Activated CD4-positive, alpha-beta memory T cell treated with anti-CD3 and anti-CD28 coated beads for 36 hours (primary cell): ENCODE measurements at regions of chr7 and their contacts with region 1.

Region 1: GRCh38 chr7:23055582-23056178 is 41.8 kb upstream of the HYCC1 start:
- DNase-seq: peak; percentile 62
- H3K4me3 Mint-ChIP-seq: no peak overlapping the region
- H3K27ac Mint-ChIP-seq: no peak overlapping the region
- H3K4me1 Mint-ChIP-seq: peaks cover 5% of the 10 kb centered on the region
- H3K27me3 Mint-ChIP-seq: peaks cover 3% of the 10 kb centered on the region

Region 2: DNA sequence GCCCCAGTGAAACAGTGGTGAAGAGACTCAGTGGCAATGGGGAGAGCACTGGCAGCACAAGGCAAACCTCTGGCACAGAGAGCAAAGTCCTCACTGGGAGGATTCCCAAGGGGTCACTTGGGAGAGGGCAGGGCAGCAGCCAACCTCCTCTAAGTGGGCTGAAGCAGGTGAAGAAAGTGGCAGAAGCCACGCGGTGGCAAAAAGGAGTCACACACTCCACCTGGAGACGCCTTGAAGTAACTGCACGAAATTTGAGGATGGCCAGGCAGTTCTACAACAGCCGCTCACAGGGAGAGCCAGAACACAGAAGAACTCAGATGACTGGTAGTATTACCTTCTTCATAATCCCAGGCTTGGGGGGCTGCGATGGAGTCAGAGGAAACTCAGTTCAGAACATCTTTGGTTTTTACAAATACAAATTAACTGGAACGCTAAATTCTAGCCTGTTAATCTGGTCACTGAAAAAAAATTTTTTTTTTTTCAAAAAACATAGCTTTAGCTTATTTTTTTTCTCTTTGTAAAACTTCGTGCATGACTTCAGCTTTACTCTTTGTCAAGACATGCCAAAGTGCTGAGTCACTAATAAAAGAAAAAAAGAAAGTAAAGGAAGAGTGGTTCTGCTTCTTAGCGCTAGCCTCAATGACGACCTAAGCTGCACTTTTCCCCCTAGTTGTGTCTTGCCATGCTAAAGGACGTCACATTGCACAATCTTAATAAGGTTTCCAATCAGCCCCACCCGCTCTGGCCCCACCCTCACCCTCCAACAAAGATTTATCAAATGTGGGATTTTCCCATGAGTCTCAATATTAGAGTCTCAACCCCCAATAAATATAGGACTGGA is 329.1 kb before region 1 on chr7:
- CTCF ChIA-PET with region 1: interaction called, 41 read pairs
- POLR2A ChIA-PET with region 1: no interaction called
- intact Hi-C with region 1: loop called (anchors 2 kb)
- DNase-seq: peak; percentile 70
- H3K4me3 Mint-ChIP-seq: peak overlapping the region; percentile 57
- H3K27ac Mint-ChIP-seq: no peak overlapping the region
- H3K4me1 Mint-ChIP-seq: peaks cover 26% of the 10 kb centered on the region
- H3K27me3 Mint-ChIP-seq: peaks cover 32% of the 10 kb centered on the region

Region 3: GRCh38 chr7:22822486-22823141 is 233.1 kb before region 1 on chr7 and contains the start of gene TOMM7:
- CTCF ChIA-PET with region 1: interaction called, 21 read pairs
- POLR2A ChIA-PET with region 1: no interaction called
- intact Hi-C with region 1: loop called (anchors 1 kb)
- DNase-seq: peak; percentile 92
- H3K4me3 Mint-ChIP-seq: peak within 1 kb of the TSS; percentile 96
- H3K27ac Mint-ChIP-seq: peak within 1 kb of the TSS; percentile 90
- H3K4me1 Mint-ChIP-seq: peaks cover 34% of the 10 kb centered on the region
- H3K27me3 Mint-ChIP-seq: peaks cover 11% of the 10 kb centered on the region
- total RNA-seq, gene TOMM7: 277 to 279 TPM

Region 4: GRCh38 chr7:22885797-22886261 is 169.9 kb before region 1 on chr7:
- CTCF ChIA-PET with region 1: interaction called, 14 read pairs
- POLR2A ChIA-PET with region 1: no interaction called
- intact Hi-C with region 1: no loop called
- DNase-seq: peak; percentile 81
- H3K4me3 Mint-ChIP-seq: peak overlapping the region; percentile 45
- H3K27ac Mint-ChIP-seq: peak overlapping the region; percentile 88
- H3K4me1 Mint-ChIP-seq: peaks cover 39% of the 10 kb centered on the region
- H3K27me3 Mint-ChIP-seq: no peaks in the 10 kb centered on the region

Region 5: DNA sequence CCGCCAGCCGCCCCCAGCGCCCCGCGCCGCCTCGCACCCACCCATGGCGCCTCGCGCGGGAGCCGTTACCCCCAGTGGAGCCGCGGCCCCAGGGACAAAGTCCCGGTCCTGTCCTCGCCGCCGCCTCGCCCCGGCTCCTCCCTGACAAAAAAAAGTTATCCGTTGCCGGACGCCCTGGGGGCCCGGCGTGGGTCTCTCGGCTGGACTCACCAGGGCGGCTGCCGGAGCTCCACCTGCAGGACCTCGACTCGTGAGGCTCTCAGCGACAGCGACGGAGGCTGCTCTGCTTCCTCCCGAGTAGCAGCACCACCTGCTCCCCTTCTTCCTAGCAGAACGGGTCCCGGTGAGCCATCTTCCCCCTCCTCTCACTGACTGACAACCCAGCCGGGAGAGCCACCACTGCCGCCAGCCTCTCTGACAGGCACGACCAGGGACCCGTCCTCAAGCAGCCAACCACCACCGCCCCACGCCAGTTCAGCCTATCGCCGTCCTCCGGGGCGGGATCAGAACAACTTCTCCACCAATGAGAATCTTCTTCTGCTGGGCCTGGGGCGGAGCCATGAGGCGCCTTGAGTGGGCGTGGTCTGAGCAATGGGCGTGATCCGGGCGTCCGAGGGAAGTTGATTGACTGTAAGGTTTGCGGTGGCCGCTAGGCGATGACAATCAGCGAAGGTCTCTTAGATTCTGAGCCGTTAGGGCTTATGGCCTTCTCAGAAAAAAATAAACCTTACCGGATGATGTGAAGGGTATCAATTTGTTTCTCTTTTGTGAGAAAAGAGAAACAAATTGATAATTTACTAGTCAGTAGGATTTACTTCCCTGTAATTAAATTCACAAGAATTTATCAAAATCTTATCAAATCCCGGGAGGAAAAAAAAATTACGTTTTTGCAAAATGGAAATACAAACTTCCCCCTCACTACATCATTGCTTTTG is 41.7 kb before region 1 on chr7 and contains the start of gene HYCC1:
- CTCF ChIA-PET with region 1: interaction called, 9 read pairs
- POLR2A ChIA-PET with region 1: no interaction called
- intact Hi-C with region 1: loop called (anchors 2 kb)
- DNase-seq: peak; percentile 100
- H3K4me3 Mint-ChIP-seq: peak within 1 kb of the TSS; percentile 94
- H3K27ac Mint-ChIP-seq: peak within 1 kb of the TSS; percentile 80
- H3K4me1 Mint-ChIP-seq: peaks cover 17% of the 10 kb centered on the region
- H3K27me3 Mint-ChIP-seq: no peaks in the 10 kb centered on the region
- total RNA-seq, gene HYCC1: 20.7 to 23.9 TPM